Uterus (tissue), 4 donors: ENCODE measurements at regions of chr11 and their contacts with region 1.

Region 1: GRCh38 chr11:4072668-4073285 is 21.8 kb upstream of the RRM1 start:
- DNase-seq: peak; percentile 37 to 76
- H3K4me3 ChIP-seq: no peak overlapping the region
- H3K27ac ChIP-seq: peak overlapping the region in 1 of 2 donors; percentile 11
- H3K4me1 ChIP-seq: no peaks in the 10 kb centered on the region
- H3K27me3 ChIP-seq: no peaks in the 10 kb centered on the region
- CTCF ChIP-seq: peak; percentile 82 to 97 (median 94)
- POLR2A ChIP-seq: peak in 1 of 2 donors; percentile 20

Region 2: GRCh38 chr11:3849297-3849874 is 223.4 kb before region 1 on chr11:
- intact Hi-C with region 1: loop called (anchors 5 kb)
- DNase-seq: no peak
- H3K4me3 ChIP-seq: no peak overlapping the region
- H3K27ac ChIP-seq: no peak overlapping the region
- H3K4me1 ChIP-seq: no peaks in the 10 kb centered on the region
- H3K27me3 ChIP-seq: no peaks in the 10 kb centered on the region
- CTCF ChIP-seq: peak; percentile 52 to 75 (median 68)
- POLR2A ChIP-seq: no peak